ENCODE measurements at regions of chr3 and their contacts with region 1.

Region 1: GRCh38 chr3:195532834-195533233 is 10.3 kb downstream of the PPP1R2 start:
- DNase-seq: no peak
- H3K4me3 ChIP-seq: no peak overlapping the region
- H3K27ac ChIP-seq: no peak overlapping the region
- H3K4me1 ChIP-seq: peaks cover 61% of the 10 kb centered on the region
- CTCF ChIP-seq: no peak

Region 2: GRCh38 chr3:194671900-194672808 is 860.7 kb before region 1 on chr3 and contains the start of gene LSG1:
- CTCF ChIA-PET with region 1: no interaction called
- POLR2A ChIA-PET with region 1: no interaction called
- intact Hi-C with region 1: loop called (anchors 5 kb)
- DNase-seq: peak; percentile 97
- H3K4me3 ChIP-seq: peak within 1 kb of the TSS; percentile 91
- H3K27ac ChIP-seq: peak within 1 kb of the TSS; percentile 50
- H3K4me1 ChIP-seq: peaks cover 19% of the 10 kb centered on the region
- CTCF ChIP-seq: no peak
- total RNA-seq, gene LSG1: 52.9 and 59.4 TPM in 2 replicates

Region 3: GRCh38 chr3:195154793-195155535 is 377.9 kb before region 1 on chr3:
- CTCF ChIA-PET with region 1: no interaction called
- POLR2A ChIA-PET with region 1: no interaction called
- intact Hi-C with region 1: no loop called
- DNase-seq: peak; percentile 73
- H3K4me3 ChIP-seq: peak overlapping the region; percentile 19
- H3K27ac ChIP-seq: peak overlapping the region; percentile 95
- H3K4me1 ChIP-seq: peaks cover 78% of the 10 kb centered on the region
- CTCF ChIP-seq: no peak

Region 4: GRCh38 chr3:195522254-195523023 is 10.4 kb before region 1 on chr3:
- CTCF ChIA-PET with region 1: interaction called, 3 read pairs
- POLR2A ChIA-PET with region 1: interaction called, 11 read pairs
- intact Hi-C with region 1: no loop called
- DNase-seq: peak; percentile 60
- H3K4me3 ChIP-seq: no peak overlapping the region
- H3K27ac ChIP-seq: peak overlapping the region; percentile 24
- H3K4me1 ChIP-seq: peaks cover 15% of the 10 kb centered on the region
- CTCF ChIP-seq: peak; percentile 99

Region 5: GRCh38 chr3:195542698-195543499 is 10.1 kb after region 1 on chr3 and contains the start of gene PPP1R2:
- CTCF ChIA-PET with region 1: no interaction called
- POLR2A ChIA-PET with region 1: interaction called, 19 read pairs
- intact Hi-C with region 1: no loop called
- DNase-seq: peak; percentile 95
- H3K4me3 ChIP-seq: peak within 1 kb of the TSS; percentile 89
- H3K27ac ChIP-seq: peak within 1 kb of the TSS; percentile 89
- H3K4me1 ChIP-seq: peaks cover 59% of the 10 kb centered on the region
- CTCF ChIP-seq: no peak
- total RNA-seq, gene PPP1R2: 239 and 294 TPM in 2 replicates

Measured in OCI-LY7 (cell line).